ENCODE measurements at regions of chr10 and their contacts with region 1.

Region 1: GRCh38 chr10:63767138-63767801 is 246.1 kb downstream of the REEP3 start:
- DNase-seq: peak in 1 of 2 experiments; percentile 36
- H3K4me3 ChIP-seq: no peak overlapping the region
- H3K4me3 Mint-ChIP-seq: no peak overlapping the region
- H3K27ac Mint-ChIP-seq: no peak overlapping the region
- H3K4me1 ChIP-seq: peaks cover 20% of the 10 kb centered on the region
- H3K4me1 Mint-ChIP-seq: peaks cover 32% of the 10 kb centered on the region
- H3K27me3 ChIP-seq: no peaks in the 10 kb centered on the region
- H3K27me3 Mint-ChIP-seq: no peaks in the 10 kb centered on the region
- CTCF ChIP-seq: peak; percentile 51 to 65

Region 2: DNA sequence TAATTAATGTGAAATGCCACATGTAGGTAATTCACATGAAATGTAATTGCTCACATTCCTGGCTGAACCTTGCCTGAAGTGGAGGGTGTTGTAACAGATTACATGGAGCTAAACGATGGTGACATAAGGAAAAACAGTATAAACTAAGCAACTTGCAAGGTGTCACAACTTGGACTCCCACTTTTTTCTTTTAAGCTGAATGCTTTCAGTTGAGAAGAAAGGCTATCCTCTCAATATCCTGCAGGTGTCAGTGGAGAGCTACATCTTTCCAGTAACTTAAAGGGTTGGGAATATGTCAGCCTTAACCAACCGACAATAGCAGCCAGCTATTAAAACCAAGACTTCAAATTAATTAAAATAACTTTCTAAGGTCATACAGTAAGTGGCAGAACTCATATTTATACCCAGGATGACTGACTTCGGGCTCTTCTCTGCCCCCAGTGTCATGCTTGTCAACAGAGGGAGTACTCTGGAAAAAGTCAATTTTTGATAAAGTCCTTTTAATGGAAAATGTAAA is 600.5 kb before region 1 on chr10:
- CTCF ChIA-PET with region 1: interaction called, 16 read pairs
- POLR2A ChIA-PET with region 1: no interaction called
- intact Hi-C with region 1: loop called (anchors 1 kb)
- DNase-seq: peak in 1 of 2 experiments; percentile 80
- H3K4me3 ChIP-seq: no peak overlapping the region
- H3K4me3 Mint-ChIP-seq: no peak overlapping the region
- H3K27ac Mint-ChIP-seq: no peak overlapping the region
- H3K4me1 ChIP-seq: no peaks in the 10 kb centered on the region
- H3K4me1 Mint-ChIP-seq: peaks cover 6% of the 10 kb centered on the region
- H3K27me3 ChIP-seq: no peaks in the 10 kb centered on the region
- H3K27me3 Mint-ChIP-seq: no peaks in the 10 kb centered on the region
- CTCF ChIP-seq: peak; percentile 92 to 94

Region 3: DNA sequence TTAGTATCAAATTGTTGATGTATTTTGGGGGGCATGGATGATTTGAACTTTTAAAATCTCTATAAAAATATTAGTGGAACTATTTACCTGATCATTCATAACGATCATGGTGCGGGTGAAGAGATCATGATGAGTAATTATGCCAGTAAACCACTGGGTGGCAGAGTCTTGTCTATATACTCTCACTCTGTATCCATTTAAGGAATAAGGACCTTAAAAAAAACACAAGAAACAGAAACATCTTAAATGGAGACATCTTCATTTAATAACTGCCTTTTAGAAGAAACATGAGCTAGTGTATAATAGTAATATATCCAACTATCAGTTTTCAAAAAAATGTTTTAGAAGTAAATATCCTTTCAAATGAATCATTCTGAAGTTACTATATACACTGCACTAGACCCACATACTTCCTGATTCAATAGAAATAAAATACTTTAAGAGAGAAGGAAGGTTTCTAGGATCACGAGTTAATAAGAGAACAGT is 550.1 kb before region 1 on chr10:
- CTCF ChIA-PET with region 1: interaction called, 3 read pairs
- POLR2A ChIA-PET with region 1: no interaction called
- intact Hi-C with region 1: loop called (anchors 1 kb)
- DNase-seq: peak in 1 of 2 experiments; percentile 64
- H3K4me3 ChIP-seq: no peak overlapping the region
- H3K4me3 Mint-ChIP-seq: no peak overlapping the region
- H3K27ac Mint-ChIP-seq: no peak overlapping the region
- H3K4me1 ChIP-seq: no peaks in the 10 kb centered on the region; the same call in 1 of the 2 replicates
- H3K4me1 Mint-ChIP-seq: no peaks in the 10 kb centered on the region
- H3K27me3 ChIP-seq: no peaks in the 10 kb centered on the region
- H3K27me3 Mint-ChIP-seq: no peaks in the 10 kb centered on the region
- CTCF ChIP-seq: peak; percentile 74 to 78

Region 4: DNA sequence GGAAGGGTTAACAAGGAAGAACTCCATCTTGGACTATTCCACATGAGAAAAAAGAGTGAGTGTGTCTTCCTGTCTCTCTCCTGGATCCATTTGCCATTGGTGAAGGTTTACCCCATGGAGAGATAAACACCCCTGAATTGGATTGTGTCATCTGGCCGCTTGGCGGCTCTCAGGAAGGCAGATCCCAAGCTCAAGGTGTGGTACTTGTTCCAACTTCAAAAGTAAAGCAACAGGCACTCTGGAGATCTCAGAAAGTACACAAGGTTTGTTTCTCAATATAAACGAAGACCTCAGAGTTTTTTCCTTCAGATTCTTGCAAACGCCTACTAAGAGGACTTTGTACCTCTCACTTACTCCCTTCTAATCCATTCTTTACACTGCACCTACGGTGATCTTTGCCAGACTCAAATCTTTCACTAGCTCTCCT is 129.4 kb before region 1 on chr10:
- CTCF ChIA-PET with region 1: no interaction called
- POLR2A ChIA-PET with region 1: no interaction called
- intact Hi-C with region 1: loop called (anchors 1 kb)
- DNase-seq: peak; percentile 74 to 76
- H3K4me3 ChIP-seq: peak overlapping the region; percentile 6; the same call in 1 of the 2 replicates
- H3K4me3 Mint-ChIP-seq: peak overlapping the region; percentile 40
- H3K27ac Mint-ChIP-seq: peak overlapping the region; percentile 17
- H3K4me1 ChIP-seq: peaks cover 29% of the 10 kb centered on the region
- H3K4me1 Mint-ChIP-seq: peaks cover 33% of the 10 kb centered on the region
- H3K27me3 ChIP-seq: no peaks in the 10 kb centered on the region
- H3K27me3 Mint-ChIP-seq: no peaks in the 10 kb centered on the region
- CTCF ChIP-seq: peak; percentile 13 to 51

Region 5: GRCh38 chr10:63738410-63738809 is 28.9 kb before region 1 on chr10:
- CTCF ChIA-PET with region 1: interaction called, 4 read pairs
- POLR2A ChIA-PET with region 1: no interaction called
- intact Hi-C with region 1: loop called (anchors 1 kb)
- DNase-seq: peak; percentile 90 to 95
- H3K4me3 ChIP-seq: no peak overlapping the region
- H3K4me3 Mint-ChIP-seq: peak overlapping the region; percentile 37
- H3K27ac Mint-ChIP-seq: peak overlapping the region; percentile 76
- H3K4me1 ChIP-seq: peaks cover 32% of the 10 kb centered on the region
- H3K4me1 Mint-ChIP-seq: peaks cover 26% of the 10 kb centered on the region
- H3K27me3 ChIP-seq: no peaks in the 10 kb centered on the region
- H3K27me3 Mint-ChIP-seq: no peaks in the 10 kb centered on the region
- CTCF ChIP-seq: no peak

Measured in Caco-2 (cell line).